ENCODE measurements at regions of chr3 and their contacts with region 1.

Region 1: GRCh38 chr3:56997675-56998074 is 62.8 kb upstream of the SPATA12 start:
- DNase-seq: no peak
- ATAC-seq: no peak
- H3K4me3 ChIP-seq: no peak overlapping the region
- H3K4me3 Mint-ChIP-seq: no peak overlapping the region
- H3K27ac ChIP-seq: no peak overlapping the region
- H3K27ac Mint-ChIP-seq: no peak overlapping the region
- H3K4me1 ChIP-seq: no peaks in the 10 kb centered on the region
- H3K4me1 Mint-ChIP-seq: peaks cover 2% of the 10 kb centered on the region
- H3K27me3 ChIP-seq: no peaks in the 10 kb centered on the region
- H3K27me3 Mint-ChIP-seq: peaks cover 2% of the 10 kb centered on the region
- CTCF ChIP-seq: no peak

Region 2: GRCh38 chr3:56693750-56694149 is 303.9 kb before region 1 on chr3:
- CTCF ChIA-PET with region 1: interaction called, 263 read pairs
- POLR2A ChIA-PET with region 1: no interaction called
- intact Hi-C with region 1: no loop called
- DNase-seq: peak in 1 of 9 experiments; percentile 38
- ATAC-seq: no peak
- H3K4me3 ChIP-seq: no peak overlapping the region
- H3K4me3 Mint-ChIP-seq: peak overlapping the region; percentile 80
- H3K27ac ChIP-seq: peak overlapping the region in 1 of 2 experiments; percentile 60
- H3K27ac Mint-ChIP-seq: peak overlapping the region; percentile 89
- H3K4me1 ChIP-seq: peaks cover 35% of the 10 kb centered on the region
- H3K4me1 Mint-ChIP-seq: peaks cover 46% of the 10 kb centered on the region
- H3K27me3 ChIP-seq: no peaks in the 10 kb centered on the region
- H3K27me3 Mint-ChIP-seq: no peaks in the 10 kb centered on the region
- CTCF ChIP-seq: no peak

Measured in CD8-positive, alpha-beta T cell (primary cell).